IMR-90 (cell line): ENCODE measurements at regions of chr17 and their contacts with region 1.

Region 1: DNA sequence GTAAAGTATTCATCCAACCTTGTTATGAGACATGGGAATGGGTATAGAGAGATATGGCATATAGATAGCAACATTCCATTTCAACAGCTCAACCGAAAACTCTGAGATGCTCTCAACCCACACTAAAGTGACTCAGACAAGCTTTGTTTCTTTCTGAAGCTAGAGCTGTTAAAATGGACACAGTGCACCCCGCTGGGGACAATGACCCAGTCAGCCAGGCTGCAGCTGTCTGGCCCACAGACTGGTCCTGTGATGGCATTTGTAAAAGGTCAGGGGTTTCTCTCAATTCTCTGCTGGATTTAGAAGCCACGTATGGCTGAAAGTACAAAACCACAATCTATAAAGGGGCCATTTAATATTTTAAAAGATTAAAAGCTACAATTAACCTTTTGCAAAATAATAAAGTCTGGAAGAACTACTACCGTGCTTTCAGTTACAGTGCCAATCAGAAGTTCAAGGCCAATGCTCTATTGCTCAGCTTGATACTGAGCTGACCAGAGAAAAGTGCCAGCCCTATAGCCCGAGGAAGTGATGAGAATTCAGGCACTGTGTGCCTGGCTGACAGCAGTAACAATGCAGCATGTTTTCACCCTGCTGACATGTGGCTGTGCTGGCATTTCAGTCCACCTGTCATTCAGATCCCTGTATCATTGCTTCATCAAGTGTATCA is 60.2 kb downstream of the TEX2 start:
- DNase-seq: peak; percentile 82
- ATAC-seq: peak; percentile 86
- H3K4me3 ChIP-seq: no peak overlapping the region
- H3K27ac ChIP-seq: no peak overlapping the region
- H3K4me1 ChIP-seq: peaks cover 20% of the 10 kb centered on the region
- H3K27me3 ChIP-seq: no peaks in the 10 kb centered on the region
- CTCF ChIP-seq: no peak
- POLR2A ChIP-seq: no peak
- RAD21 ChIP-seq: peak; percentile 31; the same call in 1 of the 2 replicates

Region 2: DNA sequence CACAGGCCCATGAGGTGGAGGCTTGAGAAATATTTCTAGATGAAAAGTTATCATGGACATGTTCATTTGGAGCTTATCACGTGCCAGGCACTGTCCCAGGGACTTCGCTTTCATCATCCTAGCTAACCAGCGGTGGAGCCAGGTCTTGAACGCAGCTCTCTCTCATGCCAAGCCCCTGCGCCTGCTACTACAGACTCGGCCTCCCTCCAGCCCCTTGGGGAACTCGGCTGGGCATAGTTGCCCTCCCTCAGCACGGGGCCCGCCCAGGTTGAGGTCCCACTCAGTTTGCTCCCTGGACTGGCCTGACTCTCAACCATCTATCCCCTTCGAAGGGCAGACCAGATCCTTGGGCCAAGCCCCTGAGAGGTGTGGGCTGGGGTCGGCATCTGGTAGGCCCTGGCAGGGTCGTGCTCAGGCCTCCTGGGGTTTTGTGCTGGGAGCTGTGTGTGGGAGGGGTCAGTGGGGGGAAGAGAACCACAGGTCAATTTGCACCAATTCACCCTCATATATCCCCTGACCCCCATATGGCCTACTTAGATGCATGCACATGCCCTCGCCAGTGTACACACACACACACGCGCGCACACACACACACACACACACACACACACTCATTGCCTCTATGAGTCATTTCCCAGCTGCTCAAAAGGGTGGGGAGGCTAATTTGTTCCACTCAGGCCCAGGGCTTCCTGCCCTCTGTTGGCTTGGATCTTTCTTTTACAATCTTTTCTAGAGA is 218.0 kb before region 1 on chr17:
- CTCF ChIA-PET with region 1: no interaction called
- POLR2A ChIA-PET with region 1: interaction called, 17 read pairs
- dilution Hi-C with region 1: no loop called
- in situ Hi-C with region 1: no loop called
- intact Hi-C with region 1: no loop called
- DNase-seq: peak; percentile 91
- ATAC-seq: peak; percentile 95
- H3K4me3 ChIP-seq: no peak overlapping the region
- H3K27ac ChIP-seq: no peak overlapping the region
- H3K4me1 ChIP-seq: peaks cover 8% of the 10 kb centered on the region; the same call in 1 of the 2 replicates
- H3K27me3 ChIP-seq: peaks cover 7% of the 10 kb centered on the region; the same call in 1 of the 2 replicates
- CTCF ChIP-seq: 0 out of 2 replicates have a peak, but pooled peaks have one; percentile 3
- POLR2A ChIP-seq: no peak
- RAD21 ChIP-seq: no peak

Region 3: DNA sequence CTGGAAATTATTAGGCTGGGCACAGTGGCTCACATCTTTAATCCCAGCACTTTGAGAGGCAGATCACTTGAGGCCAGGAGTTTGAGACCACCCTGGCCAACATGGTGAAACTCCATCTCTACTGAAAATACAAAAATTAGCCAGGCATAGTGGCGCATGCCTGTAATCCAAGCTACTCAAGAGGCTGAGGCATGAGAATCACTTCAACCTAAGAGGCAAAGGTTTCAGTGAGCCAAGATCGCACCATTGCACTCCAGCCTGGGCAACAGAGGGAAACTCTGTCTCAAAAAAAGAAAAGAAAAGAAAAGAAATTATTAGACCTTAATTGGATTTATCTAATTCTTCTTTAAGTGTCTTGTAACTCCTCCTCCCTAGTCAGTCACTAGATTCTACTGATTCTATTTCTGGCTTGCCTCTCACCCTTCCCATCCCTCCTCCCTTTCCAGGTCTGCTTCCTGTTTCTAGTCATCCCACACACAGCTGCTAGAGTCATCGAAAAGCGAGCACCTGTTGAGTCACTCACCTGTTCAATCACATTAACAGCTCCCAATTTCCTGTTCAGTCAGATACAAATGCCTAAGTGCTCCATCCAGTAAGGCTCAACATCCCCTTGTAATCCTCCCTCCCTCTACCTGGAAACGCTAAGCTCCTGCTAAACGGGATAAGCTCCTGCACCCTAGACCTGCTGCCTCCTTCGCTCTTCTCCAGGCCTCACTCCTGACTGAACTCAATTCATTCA is 107.5 kb before region 1 on chr17:
- CTCF ChIA-PET with region 1: no interaction called
- POLR2A ChIA-PET with region 1: no interaction called
- dilution Hi-C with region 1: no loop called
- in situ Hi-C with region 1: no loop called
- intact Hi-C with region 1: no loop called
- DNase-seq: no peak
- ATAC-seq: no peak
- H3K4me3 ChIP-seq: no peak overlapping the region
- H3K27ac ChIP-seq: no peak overlapping the region
- H3K4me1 ChIP-seq: peaks cover 2% of the 10 kb centered on the region; the same call in 1 of the 2 replicates
- H3K27me3 ChIP-seq: no peaks in the 10 kb centered on the region
- CTCF ChIP-seq: no peak
- POLR2A ChIP-seq: no peak
- RAD21 ChIP-seq: no peak

Region 4: GRCh38 chr17:64117981-64118979 is 84.5 kb before region 1 on chr17:
- CTCF ChIA-PET with region 1: no interaction called
- POLR2A ChIA-PET with region 1: no interaction called
- dilution Hi-C with region 1: no loop called
- in situ Hi-C with region 1: no loop called
- intact Hi-C with region 1: no loop called
- DNase-seq: no peak
- ATAC-seq: no peak
- H3K4me3 ChIP-seq: no peak overlapping the region
- H3K27ac ChIP-seq: no peak overlapping the region
- H3K4me1 ChIP-seq: peaks cover 21% of the 10 kb centered on the region
- H3K27me3 ChIP-seq: no peaks in the 10 kb centered on the region
- CTCF ChIP-seq: no peak
- POLR2A ChIP-seq: no peak
- RAD21 ChIP-seq: no peak

Region 5: DNA sequence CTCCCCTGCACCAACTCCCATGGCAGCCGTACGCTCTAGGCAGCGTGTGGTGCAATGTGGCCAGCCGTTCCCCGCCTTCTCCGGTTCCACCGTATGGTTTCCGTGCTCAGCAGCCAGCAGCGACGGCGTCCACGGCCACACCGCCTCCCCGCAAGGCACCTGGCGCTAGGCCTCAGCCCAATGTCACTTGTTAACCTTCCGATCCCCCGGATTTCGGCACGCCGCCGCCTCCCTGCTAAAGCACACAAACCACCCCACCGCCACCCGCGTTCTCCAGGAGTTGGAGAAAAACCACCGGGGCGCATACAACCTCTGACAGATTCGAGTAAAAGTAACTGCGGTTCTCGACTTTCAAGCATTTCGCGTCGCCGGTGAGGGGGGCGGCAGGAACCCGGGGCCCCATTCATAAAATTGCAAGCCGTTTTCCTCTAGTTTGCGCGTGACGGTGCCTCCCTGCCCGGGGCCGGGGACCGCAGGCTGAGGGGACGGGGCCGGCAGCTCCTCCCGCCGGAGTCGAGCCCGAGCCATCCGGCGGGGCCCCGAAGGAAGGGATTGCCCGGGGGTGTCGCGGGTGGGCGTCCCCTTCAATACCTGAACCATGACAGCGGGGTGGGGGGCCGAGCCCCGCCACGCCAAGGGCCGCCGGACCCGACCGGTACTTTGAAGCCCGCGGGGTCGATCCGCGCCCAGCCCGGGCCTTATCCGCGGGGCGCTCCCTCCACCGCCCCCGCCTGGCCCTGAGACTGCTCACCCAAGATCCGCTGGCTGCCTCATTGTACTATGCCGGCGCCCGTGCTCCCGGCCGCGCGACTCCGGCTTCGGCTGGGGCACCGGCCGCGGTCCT is 59.8 kb after region 1 on chr17 and contains the start of gene TEX2:
- CTCF ChIA-PET with region 1: no interaction called
- POLR2A ChIA-PET with region 1: no interaction called
- dilution Hi-C with region 1: no loop called
- in situ Hi-C with region 1: no loop called
- intact Hi-C with region 1: loop called (anchors 5 kb)
- DNase-seq: no peak
- ATAC-seq: peak; percentile 46
- H3K4me3 ChIP-seq: peak within 1 kb of the TSS; percentile 83
- H3K27ac ChIP-seq: peak within 1 kb of the TSS; percentile 40
- H3K4me1 ChIP-seq: peaks cover 5% of the 10 kb centered on the region
- H3K27me3 ChIP-seq: peaks cover 7% of the 10 kb centered on the region
- CTCF ChIP-seq: no peak
- POLR2A ChIP-seq: peak; percentile 72
- RAD21 ChIP-seq: no peak
- total RNA-seq, gene TEX2: 21.9 and 24.4 TPM in 2 replicates